AG04449 (cell line): ENCODE measurements at regions of chr17 and their contacts with region 1.

Region 1: DNA sequence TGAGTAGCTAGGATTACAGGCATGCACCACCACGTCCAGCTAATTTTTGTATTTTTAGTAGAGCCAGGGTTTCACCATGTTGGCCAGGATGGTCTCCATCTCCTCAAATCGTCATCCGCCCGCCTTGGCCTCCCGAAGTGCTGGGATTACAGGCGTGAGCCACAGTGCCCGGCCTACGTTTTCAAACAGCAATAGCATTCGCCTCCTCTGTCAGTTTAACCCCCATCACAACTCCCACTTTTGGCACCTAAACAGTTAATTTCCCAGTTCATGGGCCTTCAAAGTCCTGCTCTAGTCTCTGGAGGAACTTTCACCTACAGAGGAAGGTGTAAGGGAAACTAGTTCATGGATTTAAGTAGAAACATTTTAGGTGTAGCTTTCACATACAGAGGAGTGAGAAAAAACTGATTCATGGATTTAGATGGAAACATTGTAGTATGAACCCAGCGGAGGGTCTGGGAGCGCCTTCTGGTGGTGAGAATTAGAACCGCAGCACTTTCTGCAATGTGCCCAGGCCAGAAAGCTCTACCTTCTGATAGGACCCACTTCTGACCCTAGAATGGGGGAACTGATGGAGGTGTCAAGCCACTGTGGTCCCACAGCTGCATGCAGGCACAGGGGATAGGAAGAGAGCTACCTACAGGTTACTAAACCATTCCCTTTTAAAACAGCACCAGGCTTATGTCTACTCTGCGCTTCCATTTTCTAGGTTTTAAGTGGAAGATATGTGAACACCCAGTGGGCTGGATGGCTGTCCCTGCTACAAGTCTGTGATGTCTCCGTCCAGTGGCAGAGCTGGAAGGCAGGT is 12.0 kb upstream of the MEOX1 start:
- DNase-seq: no peak
- H3K4me3 ChIP-seq: no peak overlapping the region
- CTCF ChIP-seq: peak; percentile 85

Region 2: GRCh38 chr17:43524945-43525575 is 148.7 kb before region 1 on chr17:
- CTCF ChIA-PET with region 1: interaction called, 18 read pairs
- POLR2A ChIA-PET with region 1: no interaction called
- DNase-seq: no peak
- H3K4me3 ChIP-seq: no peak overlapping the region
- CTCF ChIP-seq: no peak

Region 3: DNA sequence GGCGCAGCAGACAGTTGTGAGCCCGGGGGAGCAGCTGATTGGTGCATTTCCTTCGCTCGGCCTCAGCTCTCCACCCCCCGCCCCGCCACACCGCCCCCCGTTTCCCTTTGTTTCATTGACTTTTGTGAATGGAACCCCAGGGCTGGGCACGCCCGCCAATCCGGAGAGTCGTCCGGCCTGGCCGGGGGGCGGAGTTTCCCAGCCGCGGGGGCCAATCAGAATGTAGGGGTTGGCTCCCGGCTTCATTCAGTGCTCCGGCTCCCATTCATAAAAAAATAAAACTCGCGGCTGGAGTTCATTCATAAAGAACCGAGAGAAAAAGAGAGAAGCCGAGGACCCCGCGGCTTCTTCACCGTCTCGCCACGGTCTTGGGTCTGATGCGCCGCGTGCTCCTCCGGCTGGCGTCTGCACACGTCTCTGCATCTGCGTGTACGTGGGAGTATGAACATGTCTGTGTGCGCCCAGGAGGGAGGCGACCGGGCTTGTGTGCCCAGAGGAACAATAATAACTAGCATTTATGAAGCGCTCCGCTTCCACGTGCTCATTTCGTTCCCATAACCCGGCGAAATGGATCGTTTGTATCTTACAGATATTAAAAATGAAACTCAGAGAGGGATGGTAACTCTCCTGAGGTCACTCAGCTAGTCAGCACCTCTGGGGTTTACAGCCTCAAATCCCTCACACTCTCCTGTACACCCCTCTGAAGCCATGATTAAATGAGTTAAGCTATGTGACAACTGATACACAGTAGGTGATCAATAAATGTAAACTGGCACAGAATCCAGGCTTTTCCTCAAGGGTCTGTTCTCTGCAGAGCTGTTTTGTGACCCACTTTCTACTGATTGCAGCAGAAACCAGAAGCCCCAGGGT is 127.2 kb before region 1 on chr17 and contains the start of gene ETV4:
- CTCF ChIA-PET with region 1: interaction called, 10 read pairs
- POLR2A ChIA-PET with region 1: no interaction called
- DNase-seq: no peak
- H3K4me3 ChIP-seq: peak within 1 kb of the TSS; percentile 61
- CTCF ChIP-seq: no peak

Region 4: DNA sequence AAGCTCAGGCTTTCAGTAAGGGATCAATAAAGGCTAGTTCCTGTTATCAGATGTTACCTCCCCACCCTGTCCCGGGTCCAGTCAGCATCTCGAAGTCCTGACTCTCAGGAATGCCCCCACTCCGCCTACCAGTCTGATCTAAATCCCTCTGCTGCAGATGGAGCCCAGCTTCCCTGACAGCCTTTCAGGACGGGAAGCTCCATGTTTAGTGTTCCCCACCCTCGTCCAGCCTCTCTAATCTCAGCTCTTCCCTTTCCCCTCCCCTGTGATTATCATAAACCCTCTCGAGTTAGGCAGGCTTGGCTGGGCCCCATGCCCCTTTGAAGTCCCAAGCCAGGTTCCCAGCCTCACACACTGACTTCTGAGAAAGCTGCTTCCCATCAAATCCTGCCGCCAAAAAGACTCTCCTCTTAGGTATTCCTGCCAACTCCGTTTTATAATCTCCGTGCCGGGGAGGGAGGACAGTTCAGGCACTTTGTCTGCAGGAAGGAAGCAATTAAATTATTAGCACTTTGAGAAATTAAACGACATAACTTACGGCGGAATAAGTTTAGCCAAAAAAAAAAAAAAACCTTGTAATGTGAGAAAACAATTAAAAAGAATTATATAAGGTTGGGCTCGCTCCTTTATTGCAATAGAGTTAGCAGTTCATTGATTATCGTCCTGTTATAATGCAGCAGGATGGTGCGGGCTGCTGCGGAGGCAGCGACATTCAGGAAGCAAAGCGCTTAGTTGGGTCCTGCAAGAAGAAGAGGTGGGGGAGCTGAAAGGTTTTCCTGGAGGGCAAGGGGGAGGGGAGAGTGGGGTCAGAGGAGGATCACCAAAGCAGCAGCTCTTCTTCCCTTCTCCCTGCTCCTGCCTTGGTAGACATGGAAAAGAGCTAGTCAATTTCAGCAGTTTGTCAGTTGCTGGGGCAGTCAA is 110.8 kb before region 1 on chr17:
- CTCF ChIA-PET with region 1: interaction called, 34 read pairs
- POLR2A ChIA-PET with region 1: no interaction called
- DNase-seq: no peak
- H3K4me3 ChIP-seq: no peak overlapping the region
- CTCF ChIP-seq: no peak

Region 5: GRCh38 chr17:43661699-43662412 is 11.9 kb before region 1 on chr17 and contains the start of gene MEOX1:
- CTCF ChIA-PET with region 1: interaction called, 69 read pairs
- POLR2A ChIA-PET with region 1: no interaction called
- DNase-seq: no peak
- H3K4me3 ChIP-seq: peak within 1 kb of the TSS; percentile 12; the same call in 1 of the 2 replicates
- CTCF ChIP-seq: no peak

Region 6: DNA sequence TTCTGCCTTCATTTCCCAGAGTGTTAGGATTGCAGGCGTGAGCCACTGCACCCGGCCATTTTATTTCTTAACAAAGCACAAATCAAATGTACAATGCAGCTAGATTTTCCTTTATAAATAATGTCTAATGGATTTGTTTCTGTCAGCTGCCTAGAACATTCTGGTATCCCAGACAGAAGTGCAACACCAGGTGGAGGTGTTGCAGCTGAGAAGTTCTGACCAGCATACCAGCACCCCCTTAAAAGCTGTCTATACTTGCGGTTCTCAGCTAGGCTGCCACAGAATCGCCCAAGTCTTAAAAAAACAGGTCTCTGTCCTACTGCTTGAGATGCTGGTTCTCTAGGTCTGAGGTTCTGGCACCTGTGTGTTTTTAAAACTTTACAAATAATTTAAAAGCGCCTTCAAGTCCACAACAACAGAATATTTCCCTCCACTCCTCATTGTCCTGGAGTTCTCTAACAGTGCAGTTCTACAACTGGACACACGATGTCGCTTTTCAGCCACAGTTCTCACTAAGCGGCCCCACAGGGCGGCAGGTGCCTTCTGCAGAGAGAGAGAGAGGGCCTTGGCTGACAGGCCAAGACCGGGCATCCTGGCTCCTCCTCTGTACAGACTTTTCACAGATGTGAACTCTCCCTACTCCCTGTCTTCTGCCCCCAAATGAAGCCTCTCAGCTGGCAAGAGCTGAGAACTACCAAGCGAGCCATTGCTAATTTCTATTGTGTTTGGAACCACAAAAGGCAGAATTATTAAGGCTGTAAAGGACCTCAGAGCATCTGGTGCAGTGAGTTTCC is 20.6 kb after region 1 on chr17:
- CTCF ChIA-PET with region 1: interaction called, 19 read pairs
- POLR2A ChIA-PET with region 1: no interaction called
- DNase-seq: no peak
- H3K4me3 ChIP-seq: no peak overlapping the region
- CTCF ChIP-seq: peak; percentile 78